Head of caudate nucleus (tissue), 42 donors: ENCODE measurements at regions of chr21 and their contacts with region 1.

Region 1: DNA sequence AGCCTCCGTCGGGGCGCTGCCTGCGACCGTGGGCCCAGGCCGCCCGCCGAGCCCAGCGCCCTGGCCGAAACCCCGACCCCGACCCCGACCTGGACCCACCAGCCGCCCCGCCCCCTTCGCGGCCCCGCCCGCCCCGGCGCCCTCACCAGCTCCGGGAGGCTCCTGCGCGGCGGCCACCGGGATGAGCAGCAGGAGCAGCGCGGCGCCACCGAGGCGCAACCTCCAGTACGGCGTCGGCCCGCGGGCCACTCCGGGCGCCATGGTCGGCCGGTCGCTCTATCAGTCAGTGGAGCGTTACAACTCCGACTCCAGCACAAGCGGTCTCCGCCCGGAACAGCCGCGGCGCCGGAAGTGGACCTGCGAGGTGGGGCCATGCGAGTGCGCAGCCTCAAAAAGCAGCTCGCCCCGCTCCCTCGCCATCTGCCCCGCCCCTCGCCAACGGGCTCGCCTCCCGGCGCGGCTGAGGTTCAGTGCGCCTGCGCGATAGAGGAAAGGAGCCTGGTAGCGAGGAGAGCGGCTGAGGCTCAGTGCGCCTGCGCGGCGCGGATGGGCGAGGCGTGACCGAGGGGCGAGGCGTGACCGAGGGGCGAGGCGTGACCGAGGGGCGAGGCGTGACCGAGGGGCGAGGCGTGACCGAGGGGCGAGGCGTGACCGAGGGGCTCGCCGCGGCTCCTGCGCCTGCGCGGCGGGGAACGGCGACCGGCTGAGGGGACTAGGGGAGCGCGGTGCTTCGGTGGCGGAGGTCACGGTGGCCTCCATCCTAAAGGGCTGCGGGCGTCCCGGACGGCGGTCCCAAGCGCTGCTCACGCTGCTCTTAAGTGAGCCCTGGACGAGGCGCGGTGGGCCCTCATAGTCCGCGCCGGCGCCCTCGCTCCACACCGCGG is at the start of gene PTTG1IP:
- DNase-seq: peak; percentile 88 to 99 (median 97)

Region 2: DNA sequence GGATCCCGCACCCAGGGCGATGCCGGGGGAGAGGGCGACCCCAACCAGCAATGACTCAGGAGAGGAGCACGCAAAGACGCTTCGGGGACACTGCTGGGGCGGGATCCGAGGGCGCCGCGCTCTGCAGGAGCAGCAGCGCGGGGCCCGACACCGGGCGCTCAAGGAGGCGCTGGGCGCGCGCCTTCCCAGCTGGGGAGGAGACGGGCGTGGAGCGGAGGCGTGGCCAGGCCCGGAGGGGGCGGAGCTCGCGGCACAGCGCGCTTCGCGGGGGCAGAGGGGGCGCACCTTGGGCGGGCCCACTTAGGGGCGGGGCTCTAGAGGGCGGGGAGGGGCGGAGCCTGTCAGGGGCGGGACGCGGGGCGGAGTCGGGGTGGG is 56.1 kb before region 1 on chr21:
- intact Hi-C with region 1: loop called (anchors 5 kb)
- DNase-seq: peak; percentile 71 to 97 (median 94)

Region 3: GRCh38 chr21:44927587-44928461 is 54.2 kb after region 1 on chr21:
- intact Hi-C with region 1: loop called (anchors 10 kb)
- DNase-seq: peak in 39 of 42 donors; percentile 44 to 90 (median 69)